Activated CD4-positive, alpha-beta memory T cell treated with anti-CD3 and anti-CD28 coated beads for 36 hours (primary cell): ENCODE measurements at regions of chr14 and their contacts with region 1.

Region 1: DNA sequence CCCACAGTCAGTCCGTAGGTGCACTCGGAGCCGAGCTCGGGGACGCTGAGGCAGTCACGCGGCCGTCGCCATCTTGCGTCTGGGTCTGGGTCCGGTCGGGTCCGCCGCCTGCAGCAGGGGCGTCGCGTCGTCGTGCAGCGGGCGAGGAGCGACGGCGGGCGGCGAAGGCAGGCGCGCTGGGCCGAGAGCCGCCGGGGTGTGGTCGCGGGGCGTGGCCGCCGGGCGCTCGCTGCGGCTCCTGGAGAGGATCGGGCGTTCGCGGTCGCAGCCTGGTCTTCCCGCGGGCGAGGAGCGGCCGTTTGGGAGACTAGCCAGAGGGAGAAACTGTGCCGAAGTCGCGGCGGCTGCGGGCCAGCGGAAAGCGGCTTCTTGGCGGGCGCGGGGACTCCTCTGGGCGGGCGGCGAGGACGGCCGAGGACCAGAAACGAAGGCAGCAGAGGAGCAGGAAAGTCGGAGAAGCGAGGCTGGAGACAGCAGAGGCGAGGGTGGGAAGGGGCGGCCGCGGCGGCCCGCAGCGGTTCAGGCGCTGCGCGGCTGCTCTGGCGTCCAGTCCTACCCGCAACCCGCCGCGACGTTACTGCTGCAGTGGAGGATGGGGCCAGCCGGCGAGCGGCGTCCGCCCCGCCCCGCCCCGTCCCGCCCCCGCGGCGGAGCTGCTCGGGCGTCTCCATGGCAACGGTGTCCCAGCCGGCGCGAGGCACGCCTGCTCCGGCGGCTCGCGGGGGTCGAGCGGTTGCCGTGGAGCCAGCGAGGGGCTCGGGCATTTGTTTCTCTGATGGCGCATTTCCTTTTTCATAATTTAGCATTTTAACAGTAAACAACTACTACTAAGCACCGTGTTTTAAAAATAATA is at the start of gene PNMA1:
- DNase-seq: peak; percentile 90
- H3K4me3 Mint-ChIP-seq: peak within 1 kb of the TSS; percentile 89
- H3K27ac Mint-ChIP-seq: peak within 1 kb of the TSS; percentile 93
- H3K4me1 Mint-ChIP-seq: peaks cover 13% of the 10 kb centered on the region
- H3K27me3 Mint-ChIP-seq: no peaks in the 10 kb centered on the region
- total RNA-seq, gene PNMA1: 28.2 to 28.3 TPM

Region 2: DNA sequence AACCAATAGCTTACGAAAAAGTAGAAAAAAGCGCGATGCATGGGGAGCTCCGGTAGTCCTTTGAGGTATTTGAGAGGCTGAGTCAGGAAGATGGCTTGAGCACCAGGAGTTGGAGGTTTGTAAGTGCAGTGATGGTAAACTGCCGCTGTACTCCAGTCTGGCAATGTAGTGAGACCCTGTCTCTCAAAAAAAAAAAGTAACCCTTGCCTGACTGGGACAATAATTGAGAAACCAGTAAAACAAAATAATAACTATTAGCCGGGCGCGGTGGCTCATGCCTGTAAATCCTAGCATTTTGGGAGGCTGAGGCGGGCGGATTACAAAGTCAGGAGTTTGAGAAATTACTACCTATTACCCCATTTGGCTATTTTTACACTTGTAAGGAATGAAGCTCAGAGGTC is 145.6 kb before region 1 on chr14:
- CTCF ChIA-PET with region 1: interaction called, 4 read pairs
- POLR2A ChIA-PET with region 1: interaction called, 6 read pairs
- intact Hi-C with region 1: loop called (anchors 1 kb)
- DNase-seq: peak; percentile 58
- H3K4me3 Mint-ChIP-seq: peak overlapping the region; percentile 84
- H3K27ac Mint-ChIP-seq: peak overlapping the region; percentile 99
- H3K4me1 Mint-ChIP-seq: peaks cover 42% of the 10 kb centered on the region
- H3K27me3 Mint-ChIP-seq: no peaks in the 10 kb centered on the region

Region 3: GRCh38 chr14:73644531-73645247 is 69.3 kb before region 1 on chr14 and contains the start of gene DNAL1:
- CTCF ChIA-PET with region 1: interaction called, 3 read pairs
- POLR2A ChIA-PET with region 1: interaction called, 6 read pairs
- intact Hi-C with region 1: loop called (anchors 1 kb)
- DNase-seq: peak; percentile 95
- H3K4me3 Mint-ChIP-seq: peak within 1 kb of the TSS; percentile 93
- H3K27ac Mint-ChIP-seq: peak within 1 kb of the TSS; percentile 74
- H3K4me1 Mint-ChIP-seq: peaks cover 15% of the 10 kb centered on the region
- H3K27me3 Mint-ChIP-seq: no peaks in the 10 kb centered on the region
- total RNA-seq, gene DNAL1: 4.1 to 6.2 TPM

Region 4: DNA sequence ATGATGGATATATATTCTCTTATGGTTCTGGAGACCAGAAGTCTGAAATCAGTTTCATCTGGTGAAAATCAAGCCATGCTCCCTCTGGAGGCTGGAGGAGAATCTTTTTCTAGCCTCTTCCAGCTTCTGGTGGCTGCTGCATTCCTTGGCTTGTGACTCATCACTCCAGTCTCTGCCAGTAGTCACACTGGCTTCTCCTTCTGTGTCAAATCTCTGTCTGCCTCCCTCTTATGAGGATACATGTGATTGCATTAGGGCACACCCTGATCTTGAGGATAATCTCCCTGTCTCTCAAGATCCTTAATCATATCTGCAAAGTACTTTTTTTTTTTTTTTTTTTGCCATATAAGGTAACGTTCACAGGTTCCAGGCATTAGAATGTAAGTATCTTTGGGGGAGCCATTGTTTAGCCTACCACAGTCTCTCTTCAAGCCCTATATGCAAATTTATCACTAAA is 51.5 kb before region 1 on chr14:
- CTCF ChIA-PET with region 1: no interaction called
- POLR2A ChIA-PET with region 1: no interaction called
- intact Hi-C with region 1: loop called (anchors 5 kb)
- DNase-seq: no peak
- H3K4me3 Mint-ChIP-seq: no peak overlapping the region
- H3K27ac Mint-ChIP-seq: no peak overlapping the region
- H3K4me1 Mint-ChIP-seq: no peaks in the 10 kb centered on the region
- H3K27me3 Mint-ChIP-seq: no peaks in the 10 kb centered on the region

Region 5: DNA sequence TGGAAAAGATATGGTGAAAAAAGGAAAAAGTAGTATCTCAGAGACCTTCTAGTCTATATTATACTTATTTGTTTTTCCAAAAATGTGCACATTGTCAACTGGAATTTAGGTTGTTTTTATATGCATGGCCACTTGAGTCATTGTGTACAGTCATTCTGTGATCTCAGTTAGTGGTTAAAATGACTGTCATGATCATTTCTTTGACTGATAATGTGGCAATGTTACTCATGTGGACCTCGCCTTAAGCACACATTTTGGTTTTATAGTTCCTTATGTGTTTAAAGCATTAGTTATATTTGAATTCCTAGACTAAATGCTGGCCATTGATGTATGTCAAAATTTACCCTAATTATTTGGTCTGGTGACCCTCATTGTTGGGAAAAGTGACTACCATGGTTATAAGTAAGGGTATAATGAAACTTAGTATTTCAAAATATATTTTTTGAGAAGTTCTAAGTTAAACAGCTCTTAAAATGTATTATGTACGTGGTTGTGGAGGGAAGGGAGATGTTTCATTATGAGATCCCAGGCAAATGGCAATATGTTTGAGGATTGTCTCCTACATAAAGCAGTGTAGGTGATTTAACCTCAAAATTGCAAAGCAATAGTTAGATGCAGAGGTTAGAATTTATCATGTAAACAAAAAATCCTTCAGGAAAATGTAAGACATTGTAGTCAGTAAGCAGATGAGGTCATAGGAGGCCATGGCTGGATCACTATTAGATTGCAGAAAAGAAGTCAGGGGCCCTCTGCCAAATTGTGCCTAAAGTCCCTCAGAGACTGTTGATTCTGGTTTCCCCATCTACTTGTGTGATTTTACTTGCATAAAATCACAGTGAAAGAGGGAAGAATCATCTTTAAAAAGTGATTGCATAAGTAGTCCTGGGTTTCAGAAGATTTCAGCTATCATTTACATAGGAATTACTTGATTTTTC is 17.3 kb before region 1 on chr14:
- CTCF ChIA-PET with region 1: interaction called, 3 read pairs
- POLR2A ChIA-PET with region 1: interaction called, 9 read pairs
- intact Hi-C with region 1: loop called (anchors 1 kb)
- DNase-seq: no peak
- H3K4me3 Mint-ChIP-seq: peak overlapping the region; percentile 55
- H3K27ac Mint-ChIP-seq: peak overlapping the region; percentile 86
- H3K4me1 Mint-ChIP-seq: peaks cover 38% of the 10 kb centered on the region
- H3K27me3 Mint-ChIP-seq: no peaks in the 10 kb centered on the region

Region 6: DNA sequence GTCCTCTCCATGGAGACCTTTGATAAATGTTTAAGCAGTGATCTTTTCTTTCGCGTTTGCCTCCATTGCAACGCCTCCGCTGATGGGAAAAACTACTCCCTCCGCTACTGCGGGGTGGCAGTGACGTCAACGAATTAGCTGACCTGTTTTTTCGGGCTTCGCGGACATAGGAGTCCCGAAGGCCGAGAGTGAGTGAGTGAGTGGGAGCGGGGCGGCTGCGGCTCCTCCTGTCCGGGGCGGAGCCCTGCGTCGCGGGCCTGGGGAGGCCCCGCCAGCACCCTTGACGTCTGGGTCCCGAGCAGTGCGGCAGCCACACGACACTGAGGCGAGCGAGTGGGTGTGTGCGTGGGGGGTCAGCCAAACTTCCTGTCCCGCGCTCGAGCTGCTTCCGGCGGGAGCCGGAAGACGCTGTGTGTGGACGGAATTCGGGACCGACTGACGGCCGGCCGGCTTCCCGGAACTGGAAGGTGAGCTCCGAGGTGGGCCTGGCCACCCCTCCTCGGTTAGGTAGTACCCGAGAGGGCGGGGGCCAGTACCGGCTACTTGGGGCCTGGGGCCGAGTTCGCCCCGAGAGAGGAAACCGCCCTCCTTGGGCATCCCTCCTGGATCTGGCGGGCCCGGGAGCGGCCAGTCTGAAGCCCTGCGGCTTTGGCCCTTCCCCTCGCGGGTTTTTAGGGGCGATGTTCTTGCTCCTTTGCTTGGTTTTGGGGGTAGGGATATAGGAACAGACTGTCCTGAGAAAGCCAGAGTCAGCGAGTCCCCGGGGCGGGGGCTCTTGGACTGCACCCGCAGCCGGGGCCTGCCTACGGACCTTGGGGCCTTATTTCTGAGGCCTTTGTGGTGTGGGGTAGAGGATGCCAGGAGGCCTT is 172.7 kb after region 1 on chr14 and contains the start of gene ZNF410:
- CTCF ChIA-PET with region 1: no interaction called
- POLR2A ChIA-PET with region 1: interaction called, 3 read pairs
- intact Hi-C with region 1: loop called (anchors 2 kb)
- DNase-seq: peak; percentile 97
- H3K4me3 Mint-ChIP-seq: peak within 1 kb of the TSS; percentile 93
- H3K27ac Mint-ChIP-seq: peak within 1 kb of the TSS; percentile 95
- H3K4me1 Mint-ChIP-seq: peaks cover 47% of the 10 kb centered on the region
- H3K27me3 Mint-ChIP-seq: no peaks in the 10 kb centered on the region
- total RNA-seq, gene ZNF410: 65.2 to 68.7 TPM

Region 7: GRCh38 chr14:73977600-73978295 is 263.7 kb after region 1 on chr14:
- CTCF ChIA-PET with region 1: no interaction called
- POLR2A ChIA-PET with region 1: no interaction called
- intact Hi-C with region 1: no loop called
- DNase-seq: no peak
- H3K4me3 Mint-ChIP-seq: no peak overlapping the region
- H3K27ac Mint-ChIP-seq: no peak overlapping the region
- H3K4me1 Mint-ChIP-seq: no peaks in the 10 kb centered on the region
- H3K27me3 Mint-ChIP-seq: no peaks in the 10 kb centered on the region

Region 8: GRCh38 chr14:74048281-74048680 is 334.3 kb after region 1 on chr14:
- CTCF ChIA-PET with region 1: no interaction called
- POLR2A ChIA-PET with region 1: no interaction called
- intact Hi-C with region 1: loop called (anchors 10 kb)
- DNase-seq: no peak
- H3K4me3 Mint-ChIP-seq: no peak overlapping the region
- H3K27ac Mint-ChIP-seq: no peak overlapping the region
- H3K4me1 Mint-ChIP-seq: no peaks in the 10 kb centered on the region
- H3K27me3 Mint-ChIP-seq: no peaks in the 10 kb centered on the region